Activated T-helper 2 cell treated with anti-CD3 and anti-CD28 coated beads, Interferon-gamma antibody, Interleukin-2, Interleukin-4, amounts not matched to agents 10 μg/mL and 5 μg/mL and 100 μg/mL, durations not matched to agents 14 hours and 24 hours and 36 hours (primary cell): ENCODE measurements at regions of chrX and their contacts with region 1.

Region 1: DNA sequence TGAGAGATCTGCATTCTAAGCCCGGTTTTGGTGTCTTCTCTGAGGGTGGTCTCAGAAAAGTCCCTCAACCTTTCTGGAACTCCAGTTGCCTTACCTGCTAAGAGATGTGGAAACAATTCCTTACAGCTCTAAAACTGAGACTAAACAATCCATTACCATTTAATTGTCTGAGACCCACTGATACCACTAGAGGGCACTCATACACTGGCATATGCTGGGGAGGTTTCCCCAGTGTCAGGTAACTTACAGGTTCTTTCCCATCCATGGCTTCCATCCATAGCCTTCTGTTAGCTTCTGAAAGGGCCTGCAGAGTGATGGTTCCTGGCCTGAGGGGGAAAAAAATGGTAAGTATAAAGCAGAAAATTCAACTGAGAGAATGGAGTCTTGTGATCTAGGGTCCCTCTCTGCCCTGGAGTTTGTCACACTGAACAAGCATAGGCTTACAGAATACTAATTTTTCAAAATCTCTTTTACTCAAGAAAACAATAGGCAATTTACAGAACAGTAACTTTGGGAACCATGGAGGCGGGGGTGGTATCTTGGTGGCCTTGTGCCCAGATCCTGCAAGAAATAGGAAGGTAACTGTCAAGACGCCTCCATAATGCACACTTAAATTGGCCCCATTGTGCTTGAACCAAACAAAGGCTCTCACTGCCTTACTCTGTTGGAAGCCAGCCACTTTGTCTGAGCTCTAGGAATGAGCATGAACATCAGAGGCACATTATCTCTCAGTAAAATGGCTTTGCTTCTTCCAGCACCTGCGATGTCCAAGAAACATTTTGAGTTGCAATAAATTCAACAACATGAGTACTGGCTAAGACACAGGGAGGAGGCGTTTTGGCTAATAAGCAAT is 236.1 kb downstream of the OPHN1 start:
- DNase-seq: peak; percentile 7
- H3K4me3 Mint-ChIP-seq: no peak overlapping the region
- H3K27ac Mint-ChIP-seq: no peak overlapping the region
- H3K4me1 Mint-ChIP-seq: peaks cover 13% of the 10 kb centered on the region
- H3K27me3 Mint-ChIP-seq: no peaks in the 10 kb centered on the region

Region 2: DNA sequence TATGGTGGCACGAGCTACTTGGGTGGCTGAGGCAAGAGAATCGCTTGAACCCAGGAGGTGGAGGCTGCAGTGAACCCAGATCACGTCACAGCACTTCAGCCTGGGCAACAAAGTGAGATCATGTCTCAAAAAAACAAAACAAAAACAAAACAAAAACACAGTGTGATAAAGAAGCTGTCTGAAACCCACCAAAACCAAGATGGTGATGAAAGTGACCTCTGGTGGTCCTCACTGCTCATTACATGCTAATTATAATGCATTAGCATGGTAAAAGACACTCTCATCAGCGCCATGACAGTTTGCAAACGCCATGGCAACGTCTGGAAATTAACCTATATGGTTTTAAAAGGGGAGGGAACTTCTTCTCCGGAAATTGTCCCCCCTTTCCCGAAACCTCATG is 265.5 kb after region 1 on chrX:
- intact Hi-C with region 1: loop called (anchors 2 kb)
- DNase-seq: no peak
- H3K4me3 Mint-ChIP-seq: no peak overlapping the region
- H3K27ac Mint-ChIP-seq: no peak overlapping the region
- H3K4me1 Mint-ChIP-seq: no peaks in the 10 kb centered on the region
- H3K27me3 Mint-ChIP-seq: no peaks in the 10 kb centered on the region